K562 (cell line): ENCODE measurements at regions of chr19 and their contacts with region 1.

Region 1: DNA sequence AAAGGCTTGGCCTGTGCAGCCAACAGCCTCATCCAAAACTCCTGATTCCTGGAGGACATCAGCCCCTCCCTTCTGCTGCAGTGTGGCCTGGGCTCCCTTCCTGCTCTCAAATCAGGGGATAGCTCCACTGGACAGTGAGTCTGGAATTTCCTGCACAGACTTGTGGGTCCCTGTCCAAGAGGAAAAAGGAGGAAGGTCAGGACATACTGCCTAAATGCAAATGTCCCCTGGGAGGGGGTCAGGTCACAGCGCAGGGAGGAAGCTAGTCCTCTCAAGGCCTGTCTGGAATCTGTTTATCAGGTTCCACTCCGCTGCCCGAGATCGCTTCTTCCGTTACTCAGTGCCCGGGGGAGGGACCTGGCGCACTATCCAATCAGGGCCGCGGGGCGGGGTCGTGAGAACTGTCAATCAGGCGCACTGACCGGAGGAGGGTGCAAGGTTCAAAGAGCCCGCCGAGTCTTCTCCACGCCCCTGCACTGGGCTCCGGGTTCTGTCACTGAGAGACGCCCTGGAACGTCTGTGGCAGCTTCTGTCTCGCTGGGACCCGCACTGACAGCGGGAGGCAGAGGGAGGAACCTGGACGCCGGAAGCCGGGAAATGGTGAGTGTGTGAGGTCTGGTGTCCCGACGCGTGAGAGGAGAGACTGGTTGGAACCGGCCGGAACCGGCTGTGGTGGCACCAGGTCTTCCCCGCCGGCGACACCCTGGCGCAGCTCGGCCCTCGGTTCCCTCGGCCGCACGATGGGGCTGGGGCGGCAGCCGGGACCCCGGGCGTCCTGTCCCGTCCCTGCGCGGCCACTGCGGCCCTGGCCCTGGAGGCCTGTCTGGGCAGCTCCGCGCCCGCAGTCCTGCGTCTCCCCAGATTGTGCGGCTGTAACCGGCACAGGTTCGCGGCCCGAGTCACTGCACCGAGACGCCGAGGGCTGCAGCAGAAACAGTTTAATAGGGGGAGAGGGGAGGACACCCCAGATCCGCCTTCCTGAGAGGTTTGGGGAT is at the start of gene ZNF441:
- DNase-seq: peak; percentile 96 to 98 (median 96)
- ATAC-seq: peak; percentile 99
- H3K4me3 ChIP-seq: peak within 1 kb of the TSS; percentile 96
- H3K27ac ChIP-seq: peak within 1 kb of the TSS; percentile 88
- H3K4me1 ChIP-seq: peaks cover 7 to 18% of the 10 kb centered on the region in 2 experiments
- H3K27me3 ChIP-seq: no peaks in the 10 kb centered on the region
- CTCF ChIP-seq: no peak
- EP300 ChIP-seq: 0 out of 2 replicates have a peak, but pooled peaks have one; percentile 26
- POLR2A ChIP-seq: peak; percentile 88
- RAD21 ChIP-seq: no peak
- polyA plus RNA-seq, gene ZNF441: 1.9 to 3.3 TPM

Region 2: GRCh38 chr19:11612816-11613511 is 153.9 kb before region 1 on chr19:
- CTCF ChIA-PET with region 1: no interaction called
- POLR2A ChIA-PET with region 1: no interaction called
- in situ Hi-C with region 1: no loop called
- intact Hi-C with region 1: no loop called
- DNase-seq: no peak
- ATAC-seq: no peak
- H3K4me3 ChIP-seq: no peak overlapping the region
- H3K27ac ChIP-seq: no peak overlapping the region
- H3K4me1 ChIP-seq: no peaks in the 10 kb centered on the region
- H3K27me3 ChIP-seq: no peaks in the 10 kb centered on the region
- CTCF ChIP-seq: no peak
- EP300 ChIP-seq: no peak
- POLR2A ChIP-seq: no peak
- RAD21 ChIP-seq: no peak

Region 3: DNA sequence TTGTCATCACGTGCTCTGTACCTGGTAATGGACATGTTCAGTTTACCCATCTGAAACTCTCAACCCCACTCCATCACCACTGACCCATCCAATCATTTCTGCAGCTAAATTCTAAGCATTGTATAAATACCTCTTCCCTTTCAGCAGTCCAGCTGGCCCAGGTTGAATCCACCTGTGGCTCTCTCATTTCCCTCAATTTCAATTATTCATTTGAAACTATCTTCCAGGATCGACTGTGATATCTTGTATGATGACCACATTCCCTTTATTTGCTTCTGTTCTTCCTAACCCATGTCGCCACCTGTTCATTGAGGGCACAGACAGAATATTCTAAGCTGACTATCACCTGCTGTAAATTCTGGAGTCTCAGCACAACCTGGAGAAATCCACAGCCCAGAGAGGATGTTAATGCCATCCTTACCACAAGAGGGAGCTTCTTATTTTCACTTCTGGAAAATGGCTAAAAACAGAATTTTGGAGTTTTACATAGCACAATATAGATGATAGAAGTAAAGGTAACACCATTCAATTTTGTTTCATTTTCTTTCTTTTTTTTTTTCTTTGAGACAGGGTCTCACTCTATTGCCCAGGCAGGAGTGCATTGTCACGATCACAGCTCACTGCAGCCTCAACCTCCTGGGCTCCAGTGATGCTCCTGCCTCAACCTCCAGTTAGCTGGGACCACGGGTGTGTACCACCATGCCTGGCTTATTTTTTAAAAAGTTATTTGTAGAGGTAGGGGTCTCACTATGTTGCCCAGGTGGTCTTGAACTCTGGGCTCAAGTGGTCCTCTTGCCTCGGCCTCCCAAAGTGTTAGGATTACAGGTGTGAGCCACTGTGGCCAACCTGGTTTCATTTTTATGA is 66.7 kb before region 1 on chr19:
- CTCF ChIA-PET with region 1: no interaction called
- POLR2A ChIA-PET with region 1: no interaction called
- in situ Hi-C with region 1: no loop called
- intact Hi-C with region 1: loop called (anchors 5 kb)
- DNase-seq: peak; percentile 29 to 59 (median 35)
- ATAC-seq: peak; percentile 83
- H3K4me3 ChIP-seq: no peak overlapping the region
- H3K27ac ChIP-seq: no peak overlapping the region
- H3K4me1 ChIP-seq: peaks cover 0 to 1% of the 10 kb centered on the region in 2 experiments; a peak in 3 of 5 replicates
- H3K27me3 ChIP-seq: peaks cover 0 to 8% of the 10 kb centered on the region in 2 experiments; a peak in 2 of 5 replicates
- CTCF ChIP-seq: peak; percentile 57 to 77 (median 74)
- EP300 ChIP-seq: no peak
- POLR2A ChIP-seq: no peak
- RAD21 ChIP-seq: peak in 1 of 2 experiments; percentile 70; a peak in 2 of 4 replicates